Activated T-helper 1 cell treated with anti-CD3 and anti-CD28 coated beads, Interleukin-12 subunit alpha, Interleukin-12 subunit beta, Interleukin-2, Interleukin-4 antibody, amounts not matched to agents 30 ng/mL and 10 ng/mL and 1 ng/mL, durations not matched to agents 14 hours and 24 hours and 36 hours (primary cell): ENCODE measurements at regions of chr3 and their contacts with region 1.

Region 1: GRCh38 chr3:179181021-179181472 is 32.9 kb downstream of the PIK3CA start:
- DNase-seq: no peak
- H3K4me3 Mint-ChIP-seq: no peak overlapping the region
- H3K27ac Mint-ChIP-seq: peak overlapping the region; percentile 46
- H3K4me1 Mint-ChIP-seq: no peaks in the 10 kb centered on the region
- H3K27me3 Mint-ChIP-seq: peaks cover 2% of the 10 kb centered on the region

Region 2: GRCh38 chr3:178960181-178960580 is 220.9 kb before region 1 on chr3:
- intact Hi-C with region 1: no loop called
- DNase-seq: no peak
- H3K4me3 Mint-ChIP-seq: no peak overlapping the region
- H3K27ac Mint-ChIP-seq: no peak overlapping the region
- H3K4me1 Mint-ChIP-seq: no peaks in the 10 kb centered on the region
- H3K27me3 Mint-ChIP-seq: no peaks in the 10 kb centered on the region

Region 3: GRCh38 chr3:179196098-179196497 is 15.1 kb after region 1 on chr3:
- intact Hi-C with region 1: loop called (anchors 1 kb)
- DNase-seq: peak; percentile 22
- H3K4me3 Mint-ChIP-seq: no peak overlapping the region
- H3K27ac Mint-ChIP-seq: no peak overlapping the region
- H3K4me1 Mint-ChIP-seq: peaks cover 28% of the 10 kb centered on the region
- H3K27me3 Mint-ChIP-seq: no peaks in the 10 kb centered on the region